Gastrocnemius medialis (tissue), 4 donors: ENCODE measurements at regions of chr3 and their contacts with region 1.

Region 1: GRCh38 chr3:191244242-191244867 is 45.3 kb downstream of the OSTN start:
- DNase-seq: no peak
- ATAC-seq: no peak
- H3K4me3 ChIP-seq: no peak overlapping the region
- H3K27ac ChIP-seq: no peak overlapping the region
- H3K4me1 ChIP-seq: no peaks in the 10 kb centered on the region
- H3K27me3 ChIP-seq: no peaks in the 10 kb centered on the region
- CTCF ChIP-seq: peak in 2 of 5 experiments; percentile 35 to 42
- POLR2A ChIP-seq: no peak

Region 2: DNA sequence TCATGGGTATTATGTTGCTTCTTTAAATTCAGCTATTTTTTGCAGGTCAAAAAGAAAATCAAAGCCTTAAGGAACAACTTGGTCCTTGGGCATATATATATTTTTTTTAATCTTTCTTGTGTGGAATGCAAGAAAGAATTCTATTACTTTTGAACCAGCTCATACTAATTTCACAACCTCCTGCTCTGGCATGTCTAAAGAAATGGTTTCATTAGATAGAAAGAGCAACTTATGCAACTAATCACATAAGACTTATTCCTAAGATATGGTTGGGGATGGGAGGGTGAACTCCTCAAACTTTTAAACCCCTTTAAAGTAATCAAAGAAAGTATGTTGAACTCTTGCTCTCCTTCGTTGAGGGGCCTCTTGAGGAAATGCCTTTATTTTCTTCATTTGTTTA is 496.8 kb before region 1 on chr3:
- in situ Hi-C with region 1: no loop called
- intact Hi-C with region 1: no loop called
- DNase-seq: no peak
- ATAC-seq: no peak
- H3K4me3 ChIP-seq: no peak overlapping the region
- H3K27ac ChIP-seq: no peak overlapping the region
- H3K4me1 ChIP-seq: no peaks in the 10 kb centered on the region
- H3K27me3 ChIP-seq: no peaks in the 10 kb centered on the region
- CTCF ChIP-seq: no peak
- POLR2A ChIP-seq: no peak

Region 3: GRCh38 chr3:191376516-191377141 is 132.3 kb after region 1 on chr3:
- in situ Hi-C with region 1: loop called in 2 of 4 experiments (anchors 10 to 25 kb)
- intact Hi-C with region 1: no loop called
- DNase-seq: no peak
- ATAC-seq: peak; percentile 76 to 77
- H3K4me3 ChIP-seq: peak overlapping the region in 1 of 4 donors; percentile 1
- H3K27ac ChIP-seq: peak overlapping the region; percentile 59 to 64 (median 62)
- H3K4me1 ChIP-seq: peaks cover 34 to 39% of the 10 kb centered on the region in 2 donors
- H3K27me3 ChIP-seq: no peaks in the 10 kb centered on the region
- CTCF ChIP-seq: no peak
- POLR2A ChIP-seq: peak in 1 of 2 donors; percentile 20

Region 4: GRCh38 chr3:191388823-191389222 is 144.5 kb after region 1 on chr3:
- in situ Hi-C with region 1: loop called in 2 of 4 experiments (anchors 10 to 25 kb)
- intact Hi-C with region 1: loop called (anchors 10 kb)
- DNase-seq: no peak
- ATAC-seq: no peak
- H3K4me3 ChIP-seq: no peak overlapping the region
- H3K27ac ChIP-seq: no peak overlapping the region
- H3K4me1 ChIP-seq: peaks cover 0 to 4% of the 10 kb centered on the region in 2 donors
- H3K27me3 ChIP-seq: no peaks in the 10 kb centered on the region
- CTCF ChIP-seq: no peak
- POLR2A ChIP-seq: no peak